Activated CD4-positive, alpha-beta T cell treated with anti-CD3 and anti-CD28 coated beads for 36 hours (primary cell): ENCODE measurements at regions of chr1 and their contacts with region 1.

Region 1: DNA sequence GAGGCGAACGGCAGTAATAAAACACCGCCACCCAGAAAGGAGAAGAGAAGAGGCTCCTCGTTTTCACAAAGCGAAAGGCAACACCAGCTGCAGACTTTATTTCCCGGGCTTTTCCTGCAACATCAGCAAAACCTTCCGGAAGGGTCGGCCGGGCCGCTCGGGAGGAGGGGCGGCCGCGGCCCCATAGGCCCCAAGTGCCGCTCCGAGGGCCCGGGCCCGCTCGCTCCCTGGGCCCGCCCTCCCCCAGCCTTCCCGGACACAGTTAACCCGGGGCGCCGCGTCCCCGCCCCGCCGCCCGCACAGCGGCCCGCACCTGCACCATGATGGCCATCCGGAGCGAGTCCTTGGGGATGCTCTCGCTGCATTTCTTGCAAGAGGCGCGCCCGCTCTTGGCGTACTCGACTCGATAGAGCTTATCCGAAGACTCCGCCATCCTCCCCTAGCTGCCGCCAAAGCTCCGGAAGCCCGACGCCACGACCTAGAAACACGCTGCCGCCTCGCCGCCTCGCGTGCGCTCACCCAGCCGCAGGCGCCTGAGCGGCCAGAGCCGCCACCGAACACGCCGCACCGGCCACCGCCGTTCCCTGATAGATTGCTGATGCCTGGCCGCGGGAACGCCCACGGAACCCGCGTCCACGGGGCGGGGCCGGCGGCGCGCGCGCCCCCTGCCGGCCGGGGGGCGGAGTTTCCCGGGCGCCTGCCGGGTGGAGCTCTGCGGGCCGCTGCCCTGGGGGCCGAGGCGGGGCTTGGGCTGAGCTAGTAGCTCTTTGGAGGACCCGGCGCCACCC is at the start of gene PARP1:
- DNase-seq: peak; percentile 93
- ATAC-seq: peak; percentile 94
- H3K4me3 Mint-ChIP-seq: peak within 1 kb of the TSS; percentile 88
- H3K27ac Mint-ChIP-seq: peak within 1 kb of the TSS; percentile 94
- H3K4me1 Mint-ChIP-seq: peaks cover 42% of the 10 kb centered on the region
- H3K27me3 Mint-ChIP-seq: no peaks in the 10 kb centered on the region
- total RNA-seq, gene PARP1: 237 to 242 TPM

Region 2: DNA sequence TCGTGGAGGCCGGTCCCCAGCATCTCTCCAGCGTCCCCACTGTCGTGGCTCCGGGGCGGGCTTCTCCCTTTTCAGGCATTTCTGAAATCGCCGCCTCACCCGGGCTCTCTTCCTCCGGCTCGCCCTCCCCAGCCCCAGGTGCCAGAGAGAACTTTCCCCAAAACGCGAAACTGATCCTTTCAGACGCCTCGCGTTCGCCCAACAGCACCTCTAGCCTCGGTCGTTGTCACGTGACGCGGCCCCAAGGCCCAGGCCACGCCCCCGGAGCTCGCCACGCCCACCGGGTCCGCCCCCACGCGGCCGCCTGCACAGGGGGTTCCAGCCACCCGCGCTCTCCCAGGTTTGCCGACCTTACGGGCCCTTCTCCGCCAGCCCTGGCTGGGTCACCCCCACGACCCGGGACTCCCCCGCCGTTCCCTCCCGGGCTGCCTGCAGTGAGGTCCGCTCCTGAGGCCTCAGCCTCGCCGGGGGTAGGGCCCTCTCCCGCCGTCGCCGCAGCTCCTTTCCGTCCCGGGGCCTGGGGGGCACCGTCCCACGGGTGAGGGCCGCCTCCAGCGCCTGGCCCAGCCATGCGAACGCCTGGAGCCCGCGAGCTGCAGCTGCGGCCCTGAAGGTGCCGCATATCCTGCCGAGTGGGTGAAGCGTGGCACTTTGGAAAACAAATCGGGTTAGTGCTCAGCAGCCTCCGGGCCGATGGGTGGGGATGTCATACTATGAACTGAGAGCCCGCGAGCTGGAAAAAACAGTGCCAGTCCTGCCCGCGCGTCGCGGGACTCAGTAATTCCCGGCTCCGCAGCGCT is 324.2 kb before region 1 on chr1:
- CTCF ChIA-PET with region 1: no interaction called
- POLR2A ChIA-PET with region 1: interaction called, 3 read pairs
- intact Hi-C with region 1: loop called in 1 of 2 experiments (anchors 5 kb)
- DNase-seq: peak; percentile 94
- ATAC-seq: peak; percentile 92
- H3K4me3 Mint-ChIP-seq: peak overlapping the region; percentile 75
- H3K27ac Mint-ChIP-seq: peak overlapping the region; percentile 65
- H3K4me1 Mint-ChIP-seq: peaks cover 9% of the 10 kb centered on the region
- H3K27me3 Mint-ChIP-seq: no peaks in the 10 kb centered on the region

Region 3: GRCh38 chr1:226308723-226309315 is 98.9 kb before region 1 on chr1 and contains the start of gene LIN9:
- CTCF ChIA-PET with region 1: interaction called, 6 read pairs
- POLR2A ChIA-PET with region 1: interaction called, 3 read pairs
- intact Hi-C with region 1: loop called in 1 of 2 experiments (anchors 1 kb)
- DNase-seq: peak; percentile 97
- ATAC-seq: peak; percentile 87
- H3K4me3 Mint-ChIP-seq: peak within 1 kb of the TSS; percentile 83
- H3K27ac Mint-ChIP-seq: peak within 1 kb of the TSS; percentile 86
- H3K4me1 Mint-ChIP-seq: peaks cover 15% of the 10 kb centered on the region
- H3K27me3 Mint-ChIP-seq: peaks cover 10% of the 10 kb centered on the region
- total RNA-seq, gene LIN9: 10.6 TPM

Region 4: GRCh38 chr1:226444901-226445300 is 37.2 kb after region 1 on chr1:
- CTCF ChIA-PET with region 1: interaction called, 15 read pairs
- POLR2A ChIA-PET with region 1: no interaction called
- intact Hi-C with region 1: loop called in 1 of 2 experiments (anchors 2 kb)
- DNase-seq: peak; percentile 77
- ATAC-seq: peak; percentile 99
- H3K4me3 Mint-ChIP-seq: no peak overlapping the region
- H3K27ac Mint-ChIP-seq: no peak overlapping the region
- H3K4me1 Mint-ChIP-seq: peaks cover 32% of the 10 kb centered on the region
- H3K27me3 Mint-ChIP-seq: no peaks in the 10 kb centered on the region

Region 5: GRCh38 chr1:226679853-226680516 is 272.3 kb after region 1 on chr1:
- CTCF ChIA-PET with region 1: interaction called, 3 read pairs
- POLR2A ChIA-PET with region 1: no interaction called
- intact Hi-C with region 1: loop called in 1 of 2 experiments (anchors 5 kb)
- DNase-seq: peak; percentile 89
- ATAC-seq: peak; percentile 20
- H3K4me3 Mint-ChIP-seq: peak overlapping the region; percentile 67
- H3K27ac Mint-ChIP-seq: peak overlapping the region; percentile 95
- H3K4me1 Mint-ChIP-seq: peaks cover 99% of the 10 kb centered on the region
- H3K27me3 Mint-ChIP-seq: no peaks in the 10 kb centered on the region

Region 6: DNA sequence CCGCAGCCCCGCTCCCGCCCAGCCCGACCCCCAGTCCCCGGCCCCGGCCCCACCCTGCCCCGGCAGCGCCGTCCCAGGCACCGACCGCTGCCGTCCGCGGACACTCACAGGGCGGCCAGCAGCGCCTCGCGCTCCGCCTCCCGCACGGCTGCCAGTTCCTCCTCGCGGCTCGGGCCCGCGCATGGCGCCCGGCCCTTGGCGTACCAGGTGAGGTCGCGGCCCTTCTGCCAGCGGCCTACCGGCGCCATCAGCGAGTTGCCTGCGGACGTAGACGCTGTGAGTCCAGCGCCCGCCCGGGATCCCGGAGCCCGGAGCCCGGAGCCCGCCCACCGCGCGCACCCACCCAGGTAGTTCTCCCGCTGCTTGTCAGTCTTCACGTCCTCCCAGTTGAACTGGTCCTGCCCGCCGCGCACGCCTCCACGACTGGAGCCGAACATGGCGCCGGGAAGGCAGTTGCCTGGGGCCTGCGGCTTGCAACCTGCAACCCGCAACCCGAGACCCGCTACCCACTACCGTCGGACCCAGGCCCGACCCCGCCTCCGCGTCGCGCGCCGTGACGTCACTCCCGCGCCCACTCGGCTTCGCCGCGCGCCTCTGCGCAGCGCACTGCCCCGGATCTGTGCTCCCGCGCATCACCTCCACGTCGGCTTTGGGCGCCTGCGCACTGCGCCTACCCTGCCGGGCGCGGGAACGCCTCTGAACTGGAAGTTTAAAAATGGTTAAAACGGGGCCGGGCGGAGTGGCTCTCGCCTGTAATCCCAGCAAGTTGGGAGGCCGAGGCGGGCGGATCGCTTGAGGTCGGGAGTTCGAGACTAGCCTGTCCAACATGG is 1695.3 kb after region 1 on chr1 and contains the start of gene C1orf35:
- CTCF ChIA-PET with region 1: no interaction called
- POLR2A ChIA-PET with region 1: no interaction called
- intact Hi-C with region 1: loop called in 1 of 2 experiments (anchors 5 kb)
- DNase-seq: peak; percentile 97
- ATAC-seq: peak; percentile 90
- H3K4me3 Mint-ChIP-seq: peak within 1 kb of the TSS; percentile 89
- H3K27ac Mint-ChIP-seq: peak within 1 kb of the TSS; percentile 91
- H3K4me1 Mint-ChIP-seq: peaks cover 22% of the 10 kb centered on the region
- H3K27me3 Mint-ChIP-seq: no peaks in the 10 kb centered on the region
- total RNA-seq, gene C1orf35: 14.6 to 22.5 TPM